HepG2 (cell line): ENCODE measurements at regions of chr5 and their contacts with region 1.

Region 1: DNA sequence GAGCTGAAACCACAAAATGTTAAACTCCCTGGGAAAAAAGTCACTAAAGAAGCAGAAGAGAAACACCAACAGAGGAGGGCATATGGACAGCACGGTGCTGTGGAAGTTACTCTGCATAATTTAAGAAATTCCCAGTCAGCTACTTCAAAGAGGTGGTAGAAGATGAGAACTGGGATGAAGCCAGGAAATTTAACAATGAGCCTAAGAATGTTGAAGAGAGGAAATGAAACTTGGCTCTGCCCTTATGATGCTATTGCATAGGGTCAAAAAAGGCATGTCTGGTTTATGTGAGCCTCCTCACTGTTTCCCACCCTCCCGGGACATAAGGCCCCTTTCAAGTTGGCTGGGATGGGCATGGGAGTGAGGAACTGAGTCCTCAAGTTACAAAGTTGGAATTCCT is 25.4 kb upstream of the SNX18 start:
- DNase-seq: no peak
- ATAC-seq: no peak
- H3K4me3 ChIP-seq: no peak overlapping the region
- H3K27ac ChIP-seq: no peak overlapping the region
- H3K4me1 ChIP-seq: no peaks in the 10 kb centered on the region
- H3K27me3 ChIP-seq: no peaks in the 10 kb centered on the region
- CTCF ChIP-seq: no peak
- EP300 ChIP-seq: no peak
- POLR2A ChIP-seq: no peak
- RAD21 ChIP-seq: no peak

Region 2: DNA sequence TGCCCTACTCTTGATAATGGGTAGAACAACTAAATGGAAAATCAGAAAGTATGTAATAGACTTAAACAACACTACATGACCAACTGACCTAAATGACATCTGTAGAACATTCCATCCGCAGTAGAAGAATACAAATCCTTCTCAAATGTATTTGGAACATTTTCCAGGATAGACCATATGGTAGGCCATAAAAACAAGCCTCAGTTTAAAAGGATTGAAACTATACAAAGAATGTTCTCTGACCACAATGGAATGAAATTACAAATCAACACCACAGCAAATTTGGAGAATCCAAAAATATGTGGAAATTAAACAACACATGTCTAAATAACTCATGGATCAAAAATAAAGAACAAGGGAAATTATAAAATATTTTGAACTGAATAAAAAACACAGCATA is 742.6 kb before region 1 on chr5:
- CTCF ChIA-PET with region 1: no interaction called
- POLR2A ChIA-PET with region 1: no interaction called
- in situ Hi-C with region 1: no loop called
- intact Hi-C with region 1: no loop called
- DNase-seq: no peak
- ATAC-seq: no peak
- H3K4me3 ChIP-seq: no peak overlapping the region
- H3K27ac ChIP-seq: no peak overlapping the region
- H3K4me1 ChIP-seq: no peaks in the 10 kb centered on the region
- H3K27me3 ChIP-seq: no peaks in the 10 kb centered on the region
- CTCF ChIP-seq: no peak
- EP300 ChIP-seq: no peak
- POLR2A ChIP-seq: no peak
- RAD21 ChIP-seq: no peak

Region 3: DNA sequence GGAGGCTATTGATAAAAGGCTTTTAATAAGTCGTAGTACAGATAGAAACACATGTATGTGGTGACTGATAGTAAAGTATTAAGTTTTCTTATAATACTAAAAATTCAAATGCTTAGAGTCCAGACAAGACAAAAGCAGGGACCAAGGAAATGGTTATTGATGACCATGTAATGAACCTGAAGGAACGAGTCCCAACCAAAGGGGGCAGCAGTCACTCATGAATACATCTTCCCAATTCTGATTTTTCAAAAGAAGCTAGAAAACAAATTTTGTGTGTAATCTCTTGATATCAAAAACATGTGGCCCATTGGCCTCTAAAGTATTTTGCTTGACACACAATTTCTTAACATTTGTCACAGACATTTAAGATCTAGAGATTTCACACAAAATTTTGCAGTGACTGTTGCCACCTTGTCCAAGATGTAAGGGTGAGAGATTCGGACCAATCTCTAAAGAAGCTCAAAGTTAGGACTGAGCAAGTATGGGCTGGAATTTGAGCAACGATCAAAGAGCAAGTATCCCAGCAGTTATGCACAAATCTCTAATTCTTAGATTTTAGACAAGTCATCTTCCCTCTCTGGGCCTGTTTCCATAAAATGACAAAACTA is 248.6 kb before region 1 on chr5:
- CTCF ChIA-PET with region 1: interaction called, 13 read pairs
- POLR2A ChIA-PET with region 1: no interaction called
- in situ Hi-C with region 1: no loop called
- intact Hi-C with region 1: loop called (anchors 1 kb)
- DNase-seq: peak; percentile 31
- ATAC-seq: peak; percentile 65
- H3K4me3 ChIP-seq: no peak overlapping the region
- H3K27ac ChIP-seq: no peak overlapping the region
- H3K4me1 ChIP-seq: no peaks in the 10 kb centered on the region
- H3K27me3 ChIP-seq: no peaks in the 10 kb centered on the region
- CTCF ChIP-seq: peak; percentile 65
- EP300 ChIP-seq: no peak
- POLR2A ChIP-seq: no peak
- RAD21 ChIP-seq: no peak

Region 4: DNA sequence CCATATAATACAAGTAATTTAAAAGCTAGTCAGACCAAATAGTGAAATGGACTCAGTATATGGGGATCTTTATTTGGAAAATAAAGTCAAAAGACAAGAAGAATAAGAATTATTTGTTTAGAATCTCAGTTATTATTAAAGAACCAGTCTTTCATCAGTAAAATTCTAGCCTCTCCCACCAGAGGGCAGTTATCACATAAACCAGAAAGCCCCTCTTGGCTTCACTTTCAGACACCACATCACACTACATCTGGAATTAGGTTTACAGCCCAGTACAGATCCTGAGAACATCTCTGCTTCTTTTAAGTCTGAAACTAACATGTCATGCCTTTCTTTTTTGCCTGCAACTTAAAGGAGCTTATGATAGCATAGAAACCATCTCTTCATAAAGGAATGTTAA is 48.9 kb before region 1 on chr5:
- CTCF ChIA-PET with region 1: no interaction called
- POLR2A ChIA-PET with region 1: no interaction called
- in situ Hi-C with region 1: no loop called
- intact Hi-C with region 1: loop called (anchors 1 kb)
- DNase-seq: peak; percentile 15
- ATAC-seq: no peak
- H3K4me3 ChIP-seq: no peak overlapping the region
- H3K27ac ChIP-seq: no peak overlapping the region
- H3K4me1 ChIP-seq: no peaks in the 10 kb centered on the region
- H3K27me3 ChIP-seq: peaks cover 0 to 10% of the 10 kb centered on the region in 2 experiments; a peak in 2 of 5 replicates
- CTCF ChIP-seq: 0 out of 2 replicates have a peak, but pooled peaks have one; percentile 10
- EP300 ChIP-seq: no peak
- POLR2A ChIP-seq: no peak
- RAD21 ChIP-seq: no peak

Region 5: DNA sequence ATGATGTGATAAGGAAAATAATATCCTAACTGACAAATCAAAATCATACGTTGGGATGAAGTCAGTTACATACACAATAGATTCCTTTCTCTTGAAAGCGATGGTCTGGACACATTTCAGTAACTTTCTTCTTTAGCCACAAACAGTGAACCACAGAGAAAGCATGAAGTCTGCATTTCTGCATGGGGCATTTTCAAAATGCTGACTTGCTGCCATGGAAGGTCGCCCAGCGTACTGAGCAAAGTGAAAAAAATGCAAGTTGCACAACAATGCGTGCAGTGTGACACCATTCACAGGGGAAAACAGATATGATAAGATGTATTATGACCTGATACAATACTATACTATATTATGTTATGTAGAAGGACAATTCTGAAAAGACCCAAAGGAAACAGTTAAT is 171.7 kb after region 1 on chr5:
- CTCF ChIA-PET with region 1: no interaction called
- POLR2A ChIA-PET with region 1: no interaction called
- in situ Hi-C with region 1: no loop called
- intact Hi-C with region 1: no loop called
- DNase-seq: no peak
- ATAC-seq: no peak
- H3K4me3 ChIP-seq: no peak overlapping the region
- H3K27ac ChIP-seq: no peak overlapping the region
- H3K4me1 ChIP-seq: no peaks in the 10 kb centered on the region
- H3K27me3 ChIP-seq: no peaks in the 10 kb centered on the region; a peak in 1 of 5 replicates
- CTCF ChIP-seq: no peak
- EP300 ChIP-seq: no peak
- POLR2A ChIP-seq: no peak
- RAD21 ChIP-seq: no peak